HepG2 (cell line): ENCODE measurements at regions of chr17 and their contacts with region 1.

Region 1: DNA sequence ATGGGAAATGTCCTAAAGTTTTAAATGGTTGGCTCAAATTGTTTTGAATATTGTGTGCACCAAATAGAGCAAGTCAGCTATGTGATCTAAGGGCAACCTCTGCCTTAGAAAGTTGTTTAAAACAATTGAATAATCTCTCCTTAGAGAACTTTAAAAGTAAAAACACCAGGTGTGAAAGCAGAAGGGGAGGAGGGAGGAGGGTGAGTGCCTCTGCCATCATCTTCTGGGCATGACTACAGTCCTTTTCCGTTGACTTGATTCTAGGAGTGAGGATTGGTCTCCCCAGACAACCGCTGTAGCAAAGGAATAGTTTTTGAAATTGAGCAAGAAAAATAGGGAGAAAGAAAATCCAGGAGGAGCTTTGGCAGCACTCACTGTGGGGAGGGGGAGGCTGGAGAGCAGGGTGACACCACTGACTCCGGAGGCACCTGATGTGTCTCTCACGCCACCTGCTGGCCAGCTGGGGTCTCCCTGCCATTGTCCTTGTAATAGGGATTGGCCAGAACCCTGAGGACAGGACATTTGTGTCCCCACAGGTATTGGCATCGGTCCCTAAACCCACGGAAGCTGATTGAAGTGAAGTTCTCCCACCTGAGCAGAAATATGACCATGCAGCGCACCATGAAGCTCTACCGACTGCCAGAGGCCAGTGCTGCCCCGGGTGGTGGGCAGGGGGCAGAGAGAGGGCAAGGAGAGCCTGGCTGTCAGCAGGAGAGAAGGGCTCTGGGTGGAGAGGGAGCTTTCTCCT is 33.3 kb downstream of the PLCD3 start:
- DNase-seq: peak; percentile 85
- ATAC-seq: peak; percentile 81
- H3K4me3 ChIP-seq: no peak overlapping the region
- H3K27ac ChIP-seq: no peak overlapping the region
- H3K4me1 ChIP-seq: peaks cover 22% of the 10 kb centered on the region
- H3K27me3 ChIP-seq: no peaks in the 10 kb centered on the region
- CTCF ChIP-seq: peak; percentile 96
- EP300 ChIP-seq: no peak
- POLR2A ChIP-seq: no peak
- RAD21 ChIP-seq: peak; percentile 84

Region 2: DNA sequence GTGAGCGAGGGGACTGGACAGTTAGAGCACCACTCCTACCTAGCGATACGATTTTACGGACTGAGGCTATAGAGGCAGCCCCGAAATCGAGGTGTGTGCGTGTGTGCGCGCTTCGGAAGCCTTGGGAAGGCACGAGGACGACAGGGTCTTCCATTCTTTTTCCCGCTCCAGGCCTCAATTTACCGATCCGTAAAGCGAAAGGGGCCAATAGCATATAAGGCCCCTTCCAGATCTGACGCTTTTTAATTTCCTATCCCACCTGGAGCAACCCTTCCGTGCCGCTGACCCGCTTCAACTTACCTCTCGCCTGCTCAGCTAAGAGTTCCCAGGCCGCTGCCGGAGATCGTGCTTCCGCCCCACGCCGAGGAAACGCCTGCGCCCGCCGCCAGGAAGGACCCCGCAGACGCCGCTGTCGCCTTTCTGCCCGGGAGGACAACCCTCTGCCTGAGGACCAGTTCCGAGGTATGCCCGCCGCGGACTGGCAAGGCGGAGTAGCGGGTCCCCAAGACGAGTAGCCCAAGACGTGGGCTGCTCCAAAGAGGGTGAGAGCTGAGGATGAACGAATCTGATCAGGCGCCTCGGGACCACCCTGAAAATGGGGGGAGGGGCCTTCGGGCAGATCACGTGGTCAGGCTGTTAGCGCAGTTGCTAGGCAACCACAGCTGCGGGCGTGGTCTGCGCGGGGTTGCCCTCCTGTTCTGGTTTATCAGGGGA is 199.8 kb before region 1 on chr17 and contains the start of gene EFTUD2:
- CTCF ChIA-PET with region 1: no interaction called
- POLR2A ChIA-PET with region 1: no interaction called
- in situ Hi-C with region 1: no loop called
- intact Hi-C with region 1: loop called (anchors 10 kb)
- DNase-seq: peak; percentile 85
- ATAC-seq: peak; percentile 88
- H3K4me3 ChIP-seq: peak within 1 kb of the TSS; percentile 79 to 94 (median 87)
- H3K27ac ChIP-seq: peak within 1 kb of the TSS; percentile 89
- H3K4me1 ChIP-seq: peaks cover 26% of the 10 kb centered on the region
- H3K27me3 ChIP-seq: no peaks in the 10 kb centered on the region; a peak in 1 of 5 replicates
- CTCF ChIP-seq: no peak
- EP300 ChIP-seq: peak; percentile 34 to 56; a peak in 1 of 4 replicates
- POLR2A ChIP-seq: peak; percentile 90 to 95
- RAD21 ChIP-seq: peak; percentile 51; the same call in 1 of the 2 replicates
- total RNA-seq, gene EFTUD2: 137 and 310 TPM in 2 replicates

Region 3: DNA sequence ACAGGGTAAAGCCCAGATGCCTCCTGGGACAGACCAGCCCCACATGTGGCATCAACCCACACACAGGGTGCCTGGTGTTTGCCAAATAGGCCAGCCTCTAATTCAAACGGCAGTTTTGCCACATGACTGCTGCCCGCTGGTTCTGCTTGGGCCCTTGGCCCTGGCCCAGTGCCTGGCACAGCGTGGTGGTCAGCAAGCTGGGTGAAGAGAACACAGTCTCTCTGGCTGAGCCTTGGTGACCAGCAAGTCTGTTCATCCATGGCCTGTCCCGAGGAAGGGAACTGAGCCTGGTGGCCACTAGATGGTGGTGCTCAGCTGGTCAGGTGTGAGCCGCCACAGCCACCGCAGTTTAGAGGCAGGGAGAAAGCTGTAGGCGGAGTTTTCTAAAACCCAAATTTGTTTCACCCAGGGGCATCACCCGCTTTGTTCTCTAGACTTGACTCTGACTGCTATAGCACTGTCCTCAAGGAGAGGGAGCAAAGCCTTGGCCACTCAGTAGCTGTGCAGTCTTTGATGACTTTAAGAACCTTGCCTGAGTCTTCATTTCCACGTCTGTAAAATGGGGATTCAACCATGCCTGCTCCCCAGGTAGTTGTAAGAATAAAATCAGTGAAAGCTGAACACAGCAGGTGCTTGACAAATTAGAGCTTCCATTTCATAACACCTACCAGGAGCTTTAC is 179.0 kb before region 1 on chr17:
- CTCF ChIA-PET with region 1: no interaction called
- POLR2A ChIA-PET with region 1: interaction called, 3 read pairs
- in situ Hi-C with region 1: loop called (anchors 10 kb)
- intact Hi-C with region 1: loop called (anchors 1 kb)
- DNase-seq: peak; percentile 73
- ATAC-seq: peak; percentile 81
- H3K4me3 ChIP-seq: no peak overlapping the region
- H3K27ac ChIP-seq: no peak overlapping the region
- H3K4me1 ChIP-seq: peaks cover 29% of the 10 kb centered on the region
- H3K27me3 ChIP-seq: peaks cover 9 to 30% of the 10 kb centered on the region in 2 experiments; a peak in 4 of 5 replicates
- CTCF ChIP-seq: peak; percentile 99
- EP300 ChIP-seq: no peak
- POLR2A ChIP-seq: no peak
- RAD21 ChIP-seq: peak; percentile 94

Region 4: DNA sequence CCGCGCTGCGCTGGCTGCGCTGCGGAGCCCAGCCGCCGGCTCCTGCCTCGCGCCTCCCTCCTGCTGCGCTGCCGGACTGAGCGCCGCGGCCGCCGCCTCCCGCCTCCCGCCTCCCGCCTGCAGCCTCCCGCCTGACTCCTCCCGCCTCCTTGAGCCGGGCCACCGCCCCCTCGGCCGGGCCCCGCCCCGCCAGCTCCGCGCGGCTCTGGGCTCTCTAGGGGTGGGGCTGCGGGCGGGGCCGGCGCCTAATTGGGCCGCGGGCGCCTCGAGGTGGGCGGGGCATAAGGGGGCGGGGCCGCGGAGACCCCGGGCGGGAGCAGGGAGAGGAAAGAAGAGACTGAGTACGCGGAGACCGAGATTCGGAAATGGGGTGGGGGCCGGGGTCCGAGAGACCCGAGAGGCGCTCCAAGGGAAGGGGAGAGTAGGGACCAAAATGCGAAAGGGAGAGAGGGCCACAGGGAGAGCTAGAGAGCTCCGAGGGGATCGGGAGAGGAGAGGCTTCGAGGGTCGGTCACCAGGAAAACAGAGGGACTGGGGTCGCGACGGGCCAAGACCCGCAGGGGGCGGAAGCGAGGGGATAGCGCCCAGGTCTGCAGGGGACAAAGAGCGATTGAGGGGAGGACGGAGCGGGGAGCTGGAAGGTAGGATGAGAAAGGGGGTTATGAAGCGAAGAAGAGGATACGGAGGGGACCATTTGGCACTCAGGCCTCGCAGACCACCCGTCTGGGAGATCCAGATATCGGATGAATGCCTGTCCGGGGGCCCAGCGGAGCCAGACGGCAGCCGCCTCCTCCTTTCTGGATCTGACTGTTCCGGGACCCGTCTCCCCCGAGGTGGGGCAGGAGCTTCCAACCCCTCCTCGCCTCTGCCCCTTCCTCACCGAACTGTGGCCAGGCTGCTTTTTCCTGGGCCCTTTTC is 130.6 kb before region 1 on chr17 and contains the start of gene C1QL1:
- CTCF ChIA-PET with region 1: no interaction called
- POLR2A ChIA-PET with region 1: no interaction called
- in situ Hi-C with region 1: no loop called
- intact Hi-C with region 1: loop called (anchors 1 kb)
- DNase-seq: peak; percentile 84
- ATAC-seq: peak; percentile 89
- H3K4me3 ChIP-seq: peak within 1 kb of the TSS; percentile 56 to 83 (median 63)
- H3K27ac ChIP-seq: no peak within 1 kb of the TSS
- H3K4me1 ChIP-seq: peaks cover 36% of the 10 kb centered on the region
- H3K27me3 ChIP-seq: peaks cover 35 to 79% of the 10 kb centered on the region in 2 experiments
- CTCF ChIP-seq: peak; percentile 65
- EP300 ChIP-seq: 0 out of 4 replicates have a peak, but pooled peaks of 1 of the 2 experiments have one; percentile 18
- POLR2A ChIP-seq: no peak
- RAD21 ChIP-seq: 0 out of 2 replicates have a peak, but pooled peaks have one; percentile 15
- total RNA-seq, gene C1QL1: 0.11 TPM in 1 of 2 replicates, not detected in the other

Region 5: GRCh38 chr17:45021607-45022287 is 77.3 kb before region 1 on chr17:
- CTCF ChIA-PET with region 1: interaction called, 4 read pairs
- POLR2A ChIA-PET with region 1: interaction called, 3 read pairs
- in situ Hi-C with region 1: no loop called
- intact Hi-C with region 1: loop called (anchors 1 kb)
- DNase-seq: peak; percentile 53
- ATAC-seq: peak; percentile 81
- H3K4me3 ChIP-seq: peak overlapping the region; percentile 55 to 77 (median 59)
- H3K27ac ChIP-seq: peak overlapping the region; percentile 60
- H3K4me1 ChIP-seq: peaks cover 50% of the 10 kb centered on the region
- H3K27me3 ChIP-seq: peaks cover 0 to 16% of the 10 kb centered on the region in 2 experiments; a peak in 2 of 5 replicates
- CTCF ChIP-seq: peak; percentile 79
- EP300 ChIP-seq: no peak
- POLR2A ChIP-seq: peak; percentile 32 to 65; a peak in 2 of 4 replicates
- RAD21 ChIP-seq: peak; percentile 98

Region 6: DNA sequence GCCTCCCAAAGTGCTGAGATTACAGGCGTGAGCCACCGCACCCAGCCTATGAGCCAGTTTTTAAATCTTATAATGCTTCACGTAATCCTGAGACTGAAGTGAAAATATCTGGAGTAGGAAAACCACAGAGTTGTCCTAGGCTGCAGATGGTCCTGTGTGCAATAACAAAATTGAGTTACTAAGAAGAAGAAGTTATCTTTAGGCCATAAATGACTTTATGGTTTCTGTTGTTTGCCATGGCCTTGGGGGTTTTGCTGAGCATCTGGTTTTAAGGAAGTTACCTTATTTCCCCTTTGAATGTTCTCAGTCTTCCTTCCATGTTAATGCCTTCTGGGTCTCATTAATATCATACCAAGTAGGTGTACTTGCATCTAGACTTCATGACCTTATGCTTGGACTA is 21.4 kb before region 1 on chr17:
- CTCF ChIA-PET with region 1: no interaction called
- POLR2A ChIA-PET with region 1: no interaction called
- in situ Hi-C with region 1: no loop called
- intact Hi-C with region 1: no loop called
- DNase-seq: no peak
- ATAC-seq: no peak
- H3K4me3 ChIP-seq: no peak overlapping the region
- H3K27ac ChIP-seq: no peak overlapping the region
- H3K4me1 ChIP-seq: no peaks in the 10 kb centered on the region
- H3K27me3 ChIP-seq: no peaks in the 10 kb centered on the region
- CTCF ChIP-seq: no peak
- EP300 ChIP-seq: no peak
- POLR2A ChIP-seq: no peak
- RAD21 ChIP-seq: no peak